Thyroid gland (tissue), 4 donors: ENCODE measurements at regions of chr7 and their contacts with region 1.

Region 1: DNA sequence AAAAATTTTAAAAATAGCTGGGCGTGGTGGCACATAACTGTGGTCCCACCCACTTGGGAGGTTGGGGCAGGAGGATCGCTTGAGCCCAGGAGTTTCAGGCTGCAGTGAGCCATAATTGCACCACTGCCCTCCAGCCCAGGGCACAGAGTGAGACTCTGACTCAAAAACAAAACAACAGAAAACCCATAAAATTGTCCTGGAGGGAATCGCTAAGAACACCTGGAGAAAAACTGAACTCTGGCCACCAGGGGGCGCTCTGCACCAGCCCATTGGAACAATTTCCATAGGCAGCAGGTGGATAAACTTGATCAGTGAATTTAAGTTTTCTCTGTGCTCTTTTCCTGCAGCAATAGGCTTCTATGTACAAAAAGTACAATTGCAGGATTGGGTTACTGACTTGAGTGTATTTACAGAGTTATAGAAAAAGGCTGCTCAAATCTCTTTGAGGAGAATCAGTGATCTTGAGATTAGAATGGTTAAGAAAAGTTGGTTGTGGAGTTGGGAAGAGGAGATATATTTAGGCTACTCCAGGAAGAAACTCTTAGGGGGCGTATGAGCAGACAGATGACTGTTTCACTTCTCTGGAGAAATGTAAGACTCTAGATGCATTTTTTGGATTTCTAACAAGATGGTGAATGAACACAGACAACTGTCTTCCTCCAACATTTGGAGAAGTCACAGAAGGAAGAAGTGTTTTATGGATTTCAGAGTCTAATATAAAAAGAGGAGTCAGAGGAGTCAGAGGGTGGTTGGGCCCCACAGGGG is 274.9 kb upstream of the GALNT17 start:
- DNase-seq: peak; percentile 72 to 83
- H3K4me3 ChIP-seq: no peak overlapping the region
- H3K27ac ChIP-seq: no peak overlapping the region
- H3K4me1 ChIP-seq: no peaks in the 10 kb centered on the region
- H3K27me3 ChIP-seq: no peaks in the 10 kb centered on the region
- CTCF ChIP-seq: peak; percentile 53 to 99 (median 81)
- POLR2A ChIP-seq: no peak

Region 2: DNA sequence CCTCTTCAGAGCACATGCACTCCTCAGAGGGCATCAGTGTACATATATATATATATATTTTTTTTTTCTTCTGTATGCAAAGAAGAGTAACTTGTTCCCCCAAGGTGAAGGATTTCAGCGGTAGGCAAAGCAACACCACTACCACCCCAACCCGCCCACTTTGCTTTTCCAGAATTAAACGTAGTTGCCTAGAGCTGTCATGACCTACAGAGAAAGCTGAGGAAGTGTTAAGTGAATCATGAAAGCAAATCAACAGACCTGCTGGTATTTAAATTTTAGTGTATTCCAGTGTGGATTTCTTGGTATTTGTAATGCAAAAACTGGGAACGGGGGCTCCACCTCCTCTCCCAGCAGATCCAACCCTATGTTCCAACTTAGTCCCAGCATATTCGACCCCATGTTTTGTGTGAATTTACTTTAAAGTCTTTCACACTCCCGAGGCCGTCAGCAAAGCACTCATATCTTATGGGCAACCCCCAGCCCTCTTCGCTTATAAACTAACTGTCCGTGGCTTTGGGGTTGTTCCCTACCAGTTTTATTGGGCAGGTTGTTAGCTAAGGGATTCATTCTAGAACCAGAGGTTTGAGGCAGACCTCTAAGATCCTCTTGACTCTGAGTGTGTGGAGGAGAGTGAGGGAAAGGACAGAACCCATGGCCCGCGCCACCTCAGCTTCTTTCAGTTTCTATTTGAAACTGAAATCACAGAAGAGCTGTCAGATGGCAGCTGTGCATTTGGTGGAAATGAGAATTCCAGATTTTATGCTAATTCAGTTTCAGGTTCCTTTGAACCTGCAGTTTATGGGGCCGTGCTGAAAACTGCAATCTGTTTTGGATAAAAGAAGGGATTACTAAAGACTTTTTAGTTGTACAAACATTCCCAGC is 175.3 kb before region 1 on chr7:
- intact Hi-C with region 1: no loop called
- DNase-seq: no peak
- H3K4me3 ChIP-seq: no peak overlapping the region
- H3K27ac ChIP-seq: no peak overlapping the region
- H3K4me1 ChIP-seq: no peaks in the 10 kb centered on the region
- H3K27me3 ChIP-seq: no peaks in the 10 kb centered on the region
- CTCF ChIP-seq: no peak
- POLR2A ChIP-seq: no peak

Region 3: GRCh38 chr7:71272509-71273490 is 415.8 kb after region 1 on chr7:
- intact Hi-C with region 1: no loop called
- DNase-seq: no peak
- H3K4me3 ChIP-seq: no peak overlapping the region
- H3K27ac ChIP-seq: peak overlapping the region; percentile 3 to 55 (median 50)
- H3K4me1 ChIP-seq: peaks cover 3 to 6% of the 10 kb centered on the region in 2 donors
- H3K27me3 ChIP-seq: no peaks in the 10 kb centered on the region
- CTCF ChIP-seq: no peak
- POLR2A ChIP-seq: no peak

Region 4: DNA sequence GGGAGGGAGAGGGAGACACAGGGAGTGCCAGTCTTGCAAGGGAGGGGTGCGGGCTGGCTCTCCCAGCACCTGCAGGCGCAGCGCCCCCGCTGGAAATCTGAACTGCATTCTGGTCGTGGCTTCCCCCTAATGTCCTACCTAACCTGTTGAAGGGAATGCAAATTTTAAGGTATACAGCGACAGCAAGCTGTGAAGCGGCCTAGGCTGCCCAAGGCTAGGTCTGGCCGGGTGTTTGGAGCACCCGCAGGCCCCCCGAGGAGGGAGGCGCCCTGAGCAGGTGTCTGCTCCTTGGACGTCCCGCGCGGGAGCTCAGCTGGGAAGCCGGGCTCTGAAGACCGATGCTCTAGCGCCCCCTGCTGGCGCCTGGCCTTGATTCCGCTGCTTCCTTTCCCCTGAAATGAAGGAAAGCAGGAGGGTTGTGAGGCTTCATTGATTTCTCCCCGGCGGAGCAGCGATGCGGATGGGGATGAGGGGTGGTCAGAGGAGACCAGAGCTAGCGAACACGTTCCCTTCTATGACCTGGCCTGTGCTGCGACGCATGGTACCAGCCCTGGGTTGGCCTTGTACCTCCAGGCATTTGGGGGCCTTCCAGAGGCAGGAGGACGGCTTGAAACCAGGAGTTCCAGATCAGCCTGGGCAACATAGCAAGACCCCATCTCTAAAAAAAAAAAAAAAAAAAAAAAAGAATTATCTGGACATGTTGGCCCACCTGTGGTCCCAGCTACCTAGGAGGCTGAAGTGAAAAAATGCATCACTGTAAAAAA is 876.2 kb after region 1 on chr7:
- intact Hi-C with region 1: loop called (anchors 5 kb)
- DNase-seq: peak; percentile 86 to 87
- H3K4me3 ChIP-seq: no peak overlapping the region
- H3K27ac ChIP-seq: no peak overlapping the region
- H3K4me1 ChIP-seq: peaks cover 0 to 5% of the 10 kb centered on the region in 2 donors
- H3K27me3 ChIP-seq: no peaks in the 10 kb centered on the region
- CTCF ChIP-seq: peak; percentile 67 to 91 (median 86)
- POLR2A ChIP-seq: no peak